ENCODE measurements at regions of chr1 and their contacts with region 1.

Region 1: GRCh38 chr1:206544562-206545257 is 37.4 kb downstream of the RASSF5 start:
- DNase-seq: peak; percentile 92

Region 2: GRCh38 chr1:206555473-206555935 is 10.8 kb after region 1 on chr1:
- CTCF ChIA-PET with region 1: interaction called, 19 read pairs
- POLR2A ChIA-PET with region 1: no interaction called
- DNase-seq: no peak

Region 3: GRCh38 chr1:206878456-206878855 is 333.7 kb after region 1 on chr1:
- CTCF ChIA-PET with region 1: no interaction called
- POLR2A ChIA-PET with region 1: no interaction called
- DNase-seq: no peak